Activated naive CD4-positive, alpha-beta T cell treated with anti-CD3 and anti-CD28 coated beads, Interleukin-2, amount 10 ng/mL, durations not matched to agents 7 days and 5 days (primary cell): ENCODE measurements at regions of chr9 and their contacts with region 1.

Region 1: GRCh38 chr9:93003552-93004407 is 54.7 kb upstream of the SUSD3 start:
- DNase-seq: peak; percentile 75
- H3K4me3 Mint-ChIP-seq: no peak overlapping the region
- H3K27ac Mint-ChIP-seq: peak overlapping the region; percentile 83
- H3K4me1 Mint-ChIP-seq: peaks cover 57% of the 10 kb centered on the region
- H3K27me3 Mint-ChIP-seq: no peaks in the 10 kb centered on the region

Region 2: DNA sequence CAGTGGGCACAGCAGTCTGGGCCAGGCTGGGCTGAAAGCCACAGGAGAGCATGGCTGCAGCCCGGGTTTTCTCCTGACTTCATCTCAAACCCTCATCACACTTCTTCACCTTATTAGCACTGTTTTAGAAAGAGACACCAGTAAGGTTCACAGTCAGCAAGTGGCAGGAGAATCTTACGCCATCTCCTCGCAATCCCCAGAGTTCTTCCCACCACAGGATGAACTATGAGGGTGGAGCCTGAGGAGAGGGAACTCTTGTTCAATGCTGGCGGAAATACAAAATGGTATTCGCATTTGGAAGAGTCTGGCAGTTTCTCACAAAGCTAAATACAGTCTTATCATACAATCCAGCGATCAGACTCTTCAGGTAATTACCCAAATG is 253.9 kb before region 1 on chr9:
- CTCF ChIA-PET with region 1: no interaction called
- DNase-seq: no peak
- H3K4me3 Mint-ChIP-seq: no peak overlapping the region
- H3K27ac Mint-ChIP-seq: no peak overlapping the region
- H3K4me1 Mint-ChIP-seq: peaks cover 38% of the 10 kb centered on the region
- H3K27me3 Mint-ChIP-seq: no peaks in the 10 kb centered on the region

Region 3: GRCh38 chr9:92934321-92934720 is 69.5 kb before region 1 on chr9:
- CTCF ChIA-PET with region 1: no interaction called
- DNase-seq: no peak
- H3K4me3 Mint-ChIP-seq: no peak overlapping the region
- H3K27ac Mint-ChIP-seq: no peak overlapping the region
- H3K4me1 Mint-ChIP-seq: no peaks in the 10 kb centered on the region
- H3K27me3 Mint-ChIP-seq: peaks cover 34% of the 10 kb centered on the region

Region 4: GRCh38 chr9:92954886-92955285 is 48.9 kb before region 1 on chr9:
- CTCF ChIA-PET with region 1: interaction called, 10 read pairs
- DNase-seq: no peak
- H3K4me3 Mint-ChIP-seq: peak overlapping the region; percentile 28
- H3K27ac Mint-ChIP-seq: peak overlapping the region; percentile 89
- H3K4me1 Mint-ChIP-seq: peaks cover 80% of the 10 kb centered on the region
- H3K27me3 Mint-ChIP-seq: peaks cover 10% of the 10 kb centered on the region

Region 5: DNA sequence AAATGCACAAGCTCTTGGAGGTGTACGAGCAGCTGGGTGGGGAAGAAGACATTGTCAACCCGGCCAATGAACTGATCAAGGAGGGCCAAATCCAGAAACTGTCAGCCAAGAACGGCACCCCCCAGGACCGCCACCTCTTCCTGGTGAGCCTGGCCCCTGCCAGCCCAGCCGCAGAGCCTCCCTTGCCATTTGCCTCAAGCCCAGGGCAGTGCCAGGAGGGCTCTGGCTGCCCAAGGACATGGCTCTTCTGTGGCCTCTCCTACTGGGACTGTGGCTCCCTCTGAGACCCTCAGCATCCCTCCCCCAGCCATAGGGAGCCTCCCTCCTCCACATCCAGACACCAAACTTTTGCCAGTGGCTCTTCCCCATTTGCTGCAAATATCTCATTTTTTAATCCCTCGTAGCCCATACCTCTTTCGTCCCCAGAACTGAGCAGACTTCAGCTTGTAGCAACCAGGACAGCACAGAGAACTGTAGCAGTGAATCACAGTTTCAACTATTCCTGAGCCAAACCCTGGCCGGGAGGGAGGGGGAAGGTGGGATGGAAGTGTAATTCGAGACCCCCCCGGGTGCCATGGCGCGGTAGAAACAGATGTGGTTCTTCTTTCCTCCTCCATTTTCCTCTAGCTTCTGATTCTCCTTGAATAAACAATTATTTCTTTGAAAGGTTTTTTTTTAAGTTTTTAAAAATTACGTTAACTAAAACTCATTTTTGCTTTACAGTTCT is 10.2 kb after region 1 on chr9:
- CTCF ChIA-PET with region 1: interaction called, 17 read pairs
- DNase-seq: no peak
- H3K4me3 Mint-ChIP-seq: no peak overlapping the region
- H3K27ac Mint-ChIP-seq: no peak overlapping the region
- H3K4me1 Mint-ChIP-seq: peaks cover 21% of the 10 kb centered on the region
- H3K27me3 Mint-ChIP-seq: no peaks in the 10 kb centered on the region

Region 6: DNA sequence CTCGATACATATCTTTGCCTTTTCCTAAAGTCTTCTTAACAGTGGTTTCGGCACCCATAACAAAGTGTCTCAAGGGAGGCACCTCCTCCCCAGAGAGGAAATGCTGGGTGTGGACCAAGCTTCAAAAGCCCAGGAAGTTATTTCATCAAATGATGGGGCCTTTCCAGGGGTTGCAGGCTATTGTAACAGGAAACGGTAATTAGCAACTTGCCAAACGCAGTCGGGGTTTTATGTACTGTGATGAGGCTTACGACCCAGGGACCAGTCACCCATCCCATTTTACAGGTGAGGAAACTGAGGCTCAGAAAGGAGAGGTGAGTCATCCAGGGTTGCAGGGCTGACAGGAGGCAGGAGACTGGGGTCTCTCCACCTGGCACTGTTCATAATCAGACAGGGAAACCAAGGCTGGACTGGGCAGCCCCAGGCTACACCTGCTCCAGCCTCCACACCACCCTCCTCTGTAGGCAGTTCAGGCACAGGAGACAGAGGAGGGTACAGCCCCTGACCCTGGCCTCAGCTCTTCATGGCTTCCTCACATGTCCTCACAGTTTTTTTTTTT is 24.7 kb after region 1 on chr9:
- CTCF ChIA-PET with region 1: interaction called, 17 read pairs
- DNase-seq: peak; percentile 85
- H3K4me3 Mint-ChIP-seq: peak overlapping the region; percentile 75
- H3K27ac Mint-ChIP-seq: peak overlapping the region; percentile 97
- H3K4me1 Mint-ChIP-seq: peaks cover 91% of the 10 kb centered on the region
- H3K27me3 Mint-ChIP-seq: no peaks in the 10 kb centered on the region

Region 7: DNA sequence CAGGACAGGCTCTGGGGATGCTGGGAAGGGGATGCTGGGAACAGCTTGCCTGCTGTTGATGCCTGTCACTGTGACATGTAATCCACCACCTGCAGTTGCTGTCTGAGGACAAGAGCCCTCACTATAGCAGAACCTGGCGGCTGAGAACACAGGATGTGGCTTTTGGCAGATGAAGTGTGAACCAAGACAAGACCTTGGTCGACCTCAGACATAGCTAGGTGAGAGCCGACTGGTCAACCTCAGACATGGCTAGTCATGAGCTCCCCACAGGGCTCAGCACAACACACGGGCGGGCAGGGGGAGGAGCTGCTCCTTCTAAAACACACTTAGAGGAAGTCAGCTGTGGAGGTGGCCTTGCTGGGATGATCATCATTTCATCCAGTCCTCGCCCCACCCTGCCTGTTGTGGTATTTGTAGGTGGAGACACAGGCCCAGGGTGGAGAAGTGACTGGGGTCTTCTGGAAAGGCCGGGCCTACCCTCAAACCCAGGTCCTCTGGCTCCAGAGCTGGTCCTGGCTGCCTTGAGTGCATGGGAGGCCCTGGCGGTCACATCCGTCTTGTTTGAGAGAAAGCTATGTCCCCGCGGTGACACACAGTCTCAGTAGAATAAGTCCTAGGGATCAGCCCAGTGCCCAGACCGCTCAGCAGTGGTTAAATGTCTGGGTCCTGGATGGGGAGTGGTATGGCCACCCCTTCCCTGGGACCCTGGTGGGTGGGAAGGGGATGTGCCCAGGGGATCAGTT is 60.8 kb after region 1 on chr9:
- CTCF ChIA-PET with region 1: interaction called, 11 read pairs
- DNase-seq: peak; percentile 95
- H3K4me3 Mint-ChIP-seq: peak overlapping the region; percentile 85
- H3K27ac Mint-ChIP-seq: peak overlapping the region; percentile 100
- H3K4me1 Mint-ChIP-seq: peaks cover 88% of the 10 kb centered on the region
- H3K27me3 Mint-ChIP-seq: no peaks in the 10 kb centered on the region

Region 8: DNA sequence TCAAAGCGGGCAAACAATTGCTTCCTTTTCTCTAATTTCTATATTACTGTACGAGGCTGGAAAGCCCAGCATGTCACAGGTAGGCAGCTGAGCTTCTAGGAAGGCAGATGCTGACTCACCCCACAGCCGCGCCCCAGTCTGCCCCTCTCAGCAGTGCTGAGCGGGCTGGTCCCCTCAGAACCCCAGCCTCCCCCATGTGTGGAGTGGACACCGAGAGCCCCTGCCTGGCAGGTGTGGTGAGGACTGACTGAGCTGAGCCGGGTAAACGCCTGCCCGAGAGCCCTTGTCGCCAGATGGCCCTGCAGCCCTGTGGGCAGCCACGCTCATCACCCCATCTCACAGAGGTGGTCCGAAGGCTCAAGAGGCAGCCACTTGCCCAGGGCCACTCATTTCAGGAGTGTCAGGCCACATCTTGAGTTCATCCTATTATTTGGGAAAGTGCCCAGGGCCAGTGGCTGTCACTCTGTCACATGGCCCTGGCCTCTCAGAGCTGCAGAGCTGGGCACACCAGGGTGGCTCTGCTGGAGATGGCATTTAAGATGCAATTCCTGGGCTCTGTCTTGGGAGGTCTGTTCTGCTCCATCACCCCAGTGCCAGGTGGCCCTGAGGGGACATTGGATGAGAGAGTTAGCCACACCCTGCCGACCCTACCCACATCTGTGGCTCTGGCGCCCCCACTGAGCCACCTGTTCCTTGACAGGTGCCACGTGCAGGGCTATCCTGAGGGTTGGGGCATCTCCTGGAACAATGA is 104.7 kb after region 1 on chr9:
- CTCF ChIA-PET with region 1: interaction called, 26 read pairs
- DNase-seq: peak; percentile 48
- H3K4me3 Mint-ChIP-seq: no peak overlapping the region
- H3K27ac Mint-ChIP-seq: peak overlapping the region; percentile 73
- H3K4me1 Mint-ChIP-seq: peaks cover 54% of the 10 kb centered on the region
- H3K27me3 Mint-ChIP-seq: no peaks in the 10 kb centered on the region